Naive thymus-derived CD4-positive, alpha-beta T cell (primary cell): ENCODE measurements at regions of chr3 and their contacts with region 1.

Region 1: DNA sequence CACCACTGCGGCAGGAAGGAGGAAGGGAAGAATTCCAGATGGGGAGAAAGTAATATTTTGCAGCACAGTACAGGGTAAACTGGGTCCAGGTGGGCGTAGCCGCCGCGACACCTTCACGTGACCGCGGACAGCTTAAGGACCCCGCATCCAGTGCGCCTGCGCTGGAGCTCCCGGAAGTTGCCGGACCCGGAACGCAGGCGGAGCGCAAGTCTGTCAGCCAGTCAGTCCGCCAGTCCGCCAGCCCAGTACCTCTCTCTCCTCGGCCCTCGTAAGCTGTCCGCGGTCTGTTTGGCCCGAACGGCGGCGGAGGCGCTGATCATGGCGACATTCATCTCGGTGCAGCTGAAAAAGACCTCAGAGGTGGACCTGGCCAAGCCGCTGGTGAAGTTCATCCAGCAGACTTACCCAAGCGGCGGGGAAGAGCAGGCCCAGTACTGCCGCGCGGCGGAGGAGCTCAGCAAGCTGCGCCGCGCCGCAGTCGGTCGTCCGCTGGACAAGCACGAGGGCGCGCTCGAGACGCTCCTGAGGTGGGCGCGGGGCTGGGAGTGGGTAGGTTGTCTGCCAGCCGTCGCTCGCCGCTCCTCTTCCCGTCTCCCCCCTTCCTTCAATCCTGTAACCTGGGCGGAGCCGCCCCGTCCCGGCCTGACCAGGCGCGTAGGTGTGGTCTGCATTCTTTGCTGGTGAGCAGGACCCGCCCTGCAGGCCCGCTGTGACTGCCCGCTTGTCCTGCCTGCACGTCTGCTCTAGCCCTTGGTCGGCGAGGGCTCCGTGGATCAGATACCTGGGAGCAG is at the start of gene PDCD6IP:
- DNase-seq: peak; percentile 80 to 90 (median 86)
- ATAC-seq: peak; percentile 88
- H3K4me3 ChIP-seq: peak within 1 kb of the TSS; percentile 97
- H3K4me3 Mint-ChIP-seq: peak within 1 kb of the TSS; percentile 87 to 100 (median 99)
- H3K27ac ChIP-seq: peak within 1 kb of the TSS; percentile 86
- H3K27ac Mint-ChIP-seq: peak within 1 kb of the TSS; percentile 92 to 100 (median 97)
- H3K4me1 ChIP-seq: peaks cover 21 to 24% of the 10 kb centered on the region in 2 donors
- H3K4me1 Mint-ChIP-seq: peaks cover 40 to 77% (median 67%) of the 10 kb centered on the region in 7 donors
- H3K27me3 ChIP-seq: no peaks in the 10 kb centered on the region
- H3K27me3 Mint-ChIP-seq: peaks cover 0 to 7% (median 0%) of the 10 kb centered on the region in 5 donors
- total RNA-seq, gene PDCD6IP: 139 to 221 (median 202) TPM

Region 2: DNA sequence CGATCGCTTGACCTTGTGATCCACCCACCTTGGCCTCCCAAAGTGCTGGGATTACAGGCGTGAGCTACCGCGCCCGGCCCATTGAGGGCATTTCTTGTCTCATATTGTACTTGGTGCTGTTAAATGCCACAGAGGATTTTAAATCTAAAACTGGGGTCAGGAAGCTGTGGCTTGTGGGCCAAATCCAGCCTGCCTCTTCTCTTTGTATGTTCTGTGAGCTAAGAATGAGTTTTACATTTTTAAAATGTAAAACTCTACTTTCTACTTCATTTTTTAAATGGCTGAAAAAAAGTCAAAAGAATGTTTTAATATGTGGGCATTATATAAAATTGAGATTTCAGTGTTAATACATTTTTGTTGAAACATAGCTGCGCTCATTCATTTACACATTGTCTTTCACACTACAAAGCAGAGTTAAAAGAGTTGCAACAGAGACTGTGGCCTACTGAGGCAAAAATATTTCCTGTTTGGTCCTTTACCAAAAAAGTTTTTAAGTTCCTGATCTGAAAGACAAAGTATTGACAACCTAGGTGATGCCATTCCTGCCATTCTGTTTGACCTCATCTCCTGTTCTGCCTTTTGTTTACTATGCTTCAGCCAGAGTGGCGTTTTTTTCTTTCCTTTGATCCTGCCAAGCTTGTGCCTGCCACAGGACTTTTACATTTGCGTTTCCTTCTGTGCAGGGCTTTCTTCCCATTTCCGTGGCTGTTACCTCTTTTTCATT is 50.2 kb after region 1 on chr3:
- CTCF ChIA-PET with region 1: no interaction called
- POLR2A ChIA-PET with region 1: interaction called, 3 read pairs
- intact Hi-C with region 1: loop called in 1 of 2 experiments (anchors 5 kb)
- DNase-seq: peak in 7 of 9 donors; percentile 43 to 71 (median 63)
- ATAC-seq: peak; percentile 88
- H3K4me3 ChIP-seq: peak overlapping the region; percentile 31
- H3K4me3 Mint-ChIP-seq: peak overlapping the region; percentile 33 to 75 (median 60)
- H3K27ac ChIP-seq: peak overlapping the region; percentile 41
- H3K27ac Mint-ChIP-seq: peak overlapping the region; percentile 57 to 94 (median 83)
- H3K4me1 ChIP-seq: peaks cover 0 to 26% of the 10 kb centered on the region in 2 donors
- H3K4me1 Mint-ChIP-seq: peaks cover 19 to 64% (median 57%) of the 10 kb centered on the region in 7 donors
- H3K27me3 ChIP-seq: no peaks in the 10 kb centered on the region
- H3K27me3 Mint-ChIP-seq: no peaks in the 10 kb centered on the region

Region 3: DNA sequence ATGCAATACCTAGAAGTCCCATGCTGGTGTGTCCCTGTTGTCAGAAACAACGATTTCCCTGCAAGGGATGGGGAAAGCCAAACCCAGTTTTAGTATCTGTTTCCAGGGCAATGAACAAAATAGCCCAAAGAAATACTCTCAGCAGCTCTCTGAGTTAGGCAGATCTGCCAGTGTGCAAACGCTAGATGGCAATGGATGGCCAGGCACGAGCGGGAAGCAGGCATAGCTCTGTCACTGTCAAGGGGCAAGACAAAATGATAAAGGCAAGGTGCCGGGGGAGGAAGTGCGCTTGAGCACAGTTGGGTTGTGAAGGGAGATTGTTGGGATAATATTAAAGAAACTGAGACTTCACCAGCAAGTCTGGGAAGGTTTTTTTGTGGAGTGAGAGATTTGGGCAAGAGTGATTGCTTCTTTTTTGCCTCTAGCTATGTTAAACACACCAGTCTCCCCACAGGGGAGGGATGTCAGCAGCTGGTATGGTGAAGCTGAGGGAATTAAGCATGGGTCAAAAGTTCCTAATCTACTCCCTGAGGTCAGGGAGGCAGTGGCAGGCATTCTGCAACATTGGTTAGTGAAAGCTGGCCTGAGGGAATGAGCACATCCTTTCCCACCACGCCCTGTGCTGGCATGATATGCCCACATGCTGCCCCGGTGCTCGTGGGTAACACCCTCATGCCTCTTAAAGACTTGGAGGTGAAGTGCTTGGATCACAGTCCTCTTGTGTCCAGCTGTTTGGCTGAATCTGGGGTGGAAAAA is 117.4 kb after region 1 on chr3:
- CTCF ChIA-PET with region 1: no interaction called
- POLR2A ChIA-PET with region 1: no interaction called
- intact Hi-C with region 1: no loop called
- DNase-seq: peak in 6 of 9 donors; percentile 4 to 38 (median 28)
- ATAC-seq: no peak
- H3K4me3 ChIP-seq: no peak overlapping the region
- H3K4me3 Mint-ChIP-seq: no peak overlapping the region
- H3K27ac ChIP-seq: no peak overlapping the region
- H3K27ac Mint-ChIP-seq: peak overlapping the region in 1 of 9 donors; percentile 6
- H3K4me1 ChIP-seq: no peaks in the 10 kb centered on the region
- H3K4me1 Mint-ChIP-seq: peaks cover 0 to 5% (median 0%) of the 10 kb centered on the region in 7 donors
- H3K27me3 ChIP-seq: no peaks in the 10 kb centered on the region
- H3K27me3 Mint-ChIP-seq: peaks cover 0 to 3% (median 0%) of the 10 kb centered on the region in 5 donors